Activated naive CD4-positive, alpha-beta T cell treated with anti-CD3 and anti-CD28 coated beads for 36 hours (primary cell): ENCODE measurements at regions of chr3 and their contacts with region 1.

Region 1: DNA sequence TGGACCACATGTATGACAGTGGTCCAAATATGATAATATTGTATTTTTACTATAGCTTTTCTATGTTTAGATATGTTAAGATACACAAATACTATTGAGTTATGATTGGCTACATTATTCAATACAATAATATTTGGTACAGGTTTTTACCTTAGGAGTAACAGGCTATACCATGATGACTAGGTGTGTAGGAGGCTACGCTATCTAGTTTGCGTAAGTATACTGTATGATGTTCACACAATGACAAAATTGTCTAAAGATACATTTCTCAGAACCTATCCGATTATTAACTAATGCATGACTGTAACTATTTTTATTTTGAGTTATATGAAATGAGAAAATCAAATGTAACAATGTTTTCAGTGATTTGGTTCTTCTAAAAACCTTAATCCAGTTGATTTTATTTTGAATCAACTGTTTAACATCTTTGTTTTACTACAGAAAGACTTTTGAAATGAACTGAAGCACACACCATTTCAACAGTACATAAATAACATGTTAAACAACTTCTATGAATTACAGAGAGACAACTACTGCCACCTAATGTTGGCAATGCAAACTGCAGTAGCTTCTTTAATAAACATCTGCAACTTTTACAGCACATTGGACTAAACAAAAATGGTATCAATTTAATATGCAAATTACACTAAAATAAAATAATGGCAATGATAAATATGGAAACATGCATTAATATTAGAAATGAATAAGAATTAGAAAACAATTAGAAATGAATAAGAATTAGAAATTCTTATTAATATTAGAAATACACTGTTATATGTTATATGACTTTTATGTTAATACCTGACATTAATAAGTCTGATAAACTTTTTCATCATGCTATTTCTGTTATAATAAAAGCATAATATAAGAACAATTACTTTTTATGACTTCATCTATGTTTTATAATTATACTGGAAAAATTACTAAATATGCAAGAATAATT is 255.7 kb downstream of the MBNL1 start:
- DNase-seq: peak; percentile 74
- H3K4me3 Mint-ChIP-seq: no peak overlapping the region
- H3K27ac Mint-ChIP-seq: no peak overlapping the region
- H3K4me1 Mint-ChIP-seq: no peaks in the 10 kb centered on the region
- H3K27me3 Mint-ChIP-seq: no peaks in the 10 kb centered on the region

Region 2: GRCh38 chr3:151439652-151440129 is 1084.8 kb before region 1 on chr3:
- CTCF ChIA-PET with region 1: no interaction called
- intact Hi-C with region 1: loop called (anchors 1 kb)
- DNase-seq: no peak
- H3K4me3 Mint-ChIP-seq: no peak overlapping the region
- H3K27ac Mint-ChIP-seq: no peak overlapping the region
- H3K4me1 Mint-ChIP-seq: no peaks in the 10 kb centered on the region
- H3K27me3 Mint-ChIP-seq: peaks cover 2% of the 10 kb centered on the region

Region 3: GRCh38 chr3:152026033-152026556 is 498.4 kb before region 1 on chr3:
- CTCF ChIA-PET with region 1: no interaction called
- intact Hi-C with region 1: loop called (anchors 1 kb)
- DNase-seq: no peak
- H3K4me3 Mint-ChIP-seq: no peak overlapping the region
- H3K27ac Mint-ChIP-seq: no peak overlapping the region
- H3K4me1 Mint-ChIP-seq: peaks cover 9% of the 10 kb centered on the region
- H3K27me3 Mint-ChIP-seq: peaks cover 1% of the 10 kb centered on the region

Region 4: DNA sequence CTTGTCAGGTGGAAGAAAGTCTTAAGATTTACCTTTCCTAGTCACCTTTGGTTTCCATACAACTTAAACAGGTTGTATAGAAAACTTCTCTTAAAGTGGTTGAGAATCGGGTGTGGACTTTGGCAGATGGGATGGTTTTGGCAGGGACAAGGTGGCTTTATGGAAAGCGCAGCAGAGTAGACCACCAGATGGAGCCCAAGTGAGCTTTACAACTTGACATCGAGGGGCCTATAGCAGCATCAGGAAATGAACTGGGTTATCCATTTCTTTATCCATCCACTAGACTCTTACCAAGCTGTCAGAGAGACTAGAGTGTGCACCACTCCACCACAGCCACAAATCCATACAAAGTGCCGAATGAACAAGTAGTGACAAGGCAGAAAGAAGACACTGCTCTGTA is 341.0 kb before region 1 on chr3:
- CTCF ChIA-PET with region 1: interaction called, 3 read pairs
- intact Hi-C with region 1: loop called (anchors 2 kb)
- DNase-seq: peak; percentile 80
- H3K4me3 Mint-ChIP-seq: peak overlapping the region; percentile 46
- H3K27ac Mint-ChIP-seq: peak overlapping the region; percentile 28
- H3K4me1 Mint-ChIP-seq: peaks cover 81% of the 10 kb centered on the region
- H3K27me3 Mint-ChIP-seq: no peaks in the 10 kb centered on the region

Region 5: DNA sequence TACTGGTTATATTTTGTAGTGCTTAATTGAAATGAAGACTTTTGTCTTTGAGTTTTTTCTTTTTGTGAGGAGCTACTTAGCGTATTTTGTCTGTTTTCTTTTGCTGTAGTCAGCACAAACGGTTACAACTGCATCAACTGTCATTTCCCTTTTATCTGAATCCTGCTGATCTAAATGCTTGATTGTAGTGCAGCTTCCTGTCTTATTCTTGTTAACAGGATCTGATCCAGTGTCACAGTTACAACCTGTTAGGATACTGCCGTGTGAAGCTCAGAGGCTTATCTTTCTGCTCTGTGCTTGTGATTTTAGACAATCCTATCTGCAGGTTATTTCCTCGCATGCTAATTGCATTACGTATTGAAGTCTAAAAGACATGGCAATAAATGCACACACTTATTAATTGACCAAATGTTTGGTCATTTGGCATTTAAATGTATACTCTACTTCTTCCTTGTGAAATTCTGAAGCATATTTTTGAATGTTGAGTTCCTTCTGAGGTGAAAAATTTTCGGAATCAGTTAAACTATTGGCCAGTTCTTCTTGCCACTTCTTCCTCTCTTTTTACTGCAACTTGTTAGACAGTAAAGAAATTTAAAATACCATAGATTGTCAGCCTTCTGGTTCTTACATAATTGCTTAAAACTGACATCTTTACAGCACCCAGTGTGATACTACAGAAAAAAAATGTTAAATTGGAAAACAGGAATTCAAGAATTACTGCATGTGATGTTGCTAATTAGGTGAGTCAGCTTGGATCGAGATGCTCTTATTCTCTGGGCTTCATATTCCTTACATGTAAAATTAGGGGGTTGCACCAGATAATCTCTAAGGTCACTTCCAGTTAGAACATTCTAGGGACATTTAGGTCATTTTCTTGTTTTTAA is 87.5 kb before region 1 on chr3:
- CTCF ChIA-PET with region 1: no interaction called
- intact Hi-C with region 1: no loop called
- DNase-seq: no peak
- H3K4me3 Mint-ChIP-seq: no peak overlapping the region
- H3K27ac Mint-ChIP-seq: peak overlapping the region; percentile 68
- H3K4me1 Mint-ChIP-seq: peaks cover 66% of the 10 kb centered on the region
- H3K27me3 Mint-ChIP-seq: no peaks in the 10 kb centered on the region

Region 6: DNA sequence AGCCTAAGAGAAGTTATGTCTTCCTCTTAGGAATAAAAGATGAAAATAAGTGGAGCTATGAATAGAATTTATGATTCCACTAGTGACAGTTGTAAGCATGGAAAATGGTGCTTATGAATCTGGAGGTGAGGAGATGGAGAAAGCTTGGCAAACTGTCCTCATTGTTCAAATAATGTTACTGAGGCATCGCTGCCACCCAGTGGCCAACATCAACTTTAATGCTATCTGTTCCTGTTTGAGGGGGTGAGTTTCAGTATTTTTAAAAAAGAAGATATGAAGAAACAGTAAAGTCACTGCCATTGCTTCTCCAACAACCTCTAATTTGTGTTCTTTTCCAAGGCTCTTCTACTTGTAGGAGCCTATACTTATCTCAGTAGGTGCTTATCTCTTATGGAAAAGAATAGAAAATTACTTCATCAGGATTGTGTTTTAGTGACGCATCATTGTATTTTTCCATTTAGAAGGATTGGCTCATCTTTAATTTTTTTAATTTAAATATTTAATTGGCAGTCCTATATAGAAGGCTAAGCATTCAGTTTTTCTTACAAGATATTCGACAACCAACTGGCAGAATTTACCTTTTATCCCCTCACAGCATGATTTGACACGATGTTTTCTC is 50.1 kb after region 1 on chr3:
- CTCF ChIA-PET with region 1: interaction called, 7 read pairs
- intact Hi-C with region 1: loop called (anchors 5 kb)
- DNase-seq: peak; percentile 68
- H3K4me3 Mint-ChIP-seq: no peak overlapping the region
- H3K27ac Mint-ChIP-seq: no peak overlapping the region
- H3K4me1 Mint-ChIP-seq: no peaks in the 10 kb centered on the region
- H3K27me3 Mint-ChIP-seq: no peaks in the 10 kb centered on the region